Activated CD4-positive, alpha-beta memory T cell treated with anti-CD3 and anti-CD28 coated beads, Interleukin-2, amount 10 ng/mL, durations not matched to agents 7 days and 5 days (primary cell): ENCODE measurements at regions of chr17 and their contacts with region 1.

Region 1: GRCh38 chr17:1095090-1095852 is 84.5 kb downstream of the ABR start:
- DNase-seq: no peak
- H3K4me3 Mint-ChIP-seq: no peak overlapping the region
- H3K27ac Mint-ChIP-seq: peak overlapping the region; percentile 47
- H3K4me1 Mint-ChIP-seq: peaks cover 48% of the 10 kb centered on the region
- H3K27me3 Mint-ChIP-seq: no peaks in the 10 kb centered on the region

Region 2: GRCh38 chr17:1058423-1059130 is 36.7 kb before region 1 on chr17:
- CTCF ChIA-PET with region 1: interaction called, 24 read pairs
- POLR2A ChIA-PET with region 1: no interaction called
- DNase-seq: peak; percentile 74
- H3K4me3 Mint-ChIP-seq: no peak overlapping the region
- H3K27ac Mint-ChIP-seq: no peak overlapping the region
- H3K4me1 Mint-ChIP-seq: peaks cover 14% of the 10 kb centered on the region
- H3K27me3 Mint-ChIP-seq: no peaks in the 10 kb centered on the region

Region 3: GRCh38 chr17:1108861-1109605 is 13.8 kb after region 1 on chr17:
- CTCF ChIA-PET with region 1: interaction called, 6 read pairs
- POLR2A ChIA-PET with region 1: interaction called, 28 read pairs
- DNase-seq: peak; percentile 78
- H3K4me3 Mint-ChIP-seq: peak overlapping the region; percentile 85
- H3K27ac Mint-ChIP-seq: peak overlapping the region; percentile 81
- H3K4me1 Mint-ChIP-seq: peaks cover 55% of the 10 kb centered on the region
- H3K27me3 Mint-ChIP-seq: no peaks in the 10 kb centered on the region

Region 4: DNA sequence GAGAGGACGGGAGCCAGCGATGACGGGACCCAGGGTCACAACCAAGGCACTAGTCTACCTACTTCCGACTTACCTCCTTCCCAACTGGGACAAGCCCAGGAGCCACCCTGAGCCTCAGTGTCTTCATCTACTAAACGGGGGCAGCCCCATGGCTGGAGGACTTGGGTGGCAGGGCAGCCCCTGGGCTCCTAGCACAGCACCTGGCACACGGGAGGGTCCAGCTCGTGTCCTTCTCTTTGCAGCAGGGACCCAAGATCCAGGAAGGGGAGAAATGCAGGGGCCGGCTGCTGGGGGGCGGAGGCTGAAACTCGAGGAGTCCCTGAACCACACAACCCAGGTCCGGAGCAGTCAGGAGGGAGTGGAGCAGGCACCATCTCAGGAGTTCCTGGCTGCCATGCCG is 21.3 kb after region 1 on chr17:
- CTCF ChIA-PET with region 1: interaction called, 11 read pairs
- POLR2A ChIA-PET with region 1: interaction called, 12 read pairs
- DNase-seq: no peak
- H3K4me3 Mint-ChIP-seq: no peak overlapping the region
- H3K27ac Mint-ChIP-seq: peak overlapping the region; percentile 73
- H3K4me1 Mint-ChIP-seq: peaks cover 41% of the 10 kb centered on the region
- H3K27me3 Mint-ChIP-seq: no peaks in the 10 kb centered on the region